Right ventricle myocardium superior (tissue), 1 donor: ENCODE measurements at regions of chr10 and their contacts with region 1.

Region 1: GRCh38 chr10:29635711-29636144 is 957 bp upstream of the SVIL start:
- DNase-seq: no peak
- ATAC-seq: peak; percentile 28

Region 2: DNA sequence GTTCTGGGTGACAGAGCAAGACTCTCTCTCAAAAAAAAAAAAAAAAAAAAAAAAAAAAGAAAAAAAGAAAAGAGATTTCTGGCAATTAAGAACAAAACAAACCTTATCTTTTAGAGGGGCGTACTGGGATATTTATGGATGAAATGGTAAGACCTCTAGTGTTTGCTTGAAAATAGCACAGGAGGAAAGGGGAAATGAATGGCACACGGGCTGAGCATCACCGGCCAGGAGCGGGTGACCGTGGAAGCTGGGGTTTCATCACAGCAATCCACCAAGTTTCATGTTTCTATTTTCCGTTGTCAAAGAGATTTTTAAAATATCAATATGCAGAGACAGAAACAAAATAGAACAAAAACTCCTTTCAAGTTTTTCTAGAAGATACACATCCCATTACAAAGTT is 106.6 kb before region 1 on chr10:
- intact Hi-C with region 1: loop called (anchors 5 kb)
- DNase-seq: no peak
- ATAC-seq: no peak

Region 3: GRCh38 chr10:29857843-29858701 is 222.3 kb after region 1 on chr10:
- intact Hi-C with region 1: loop called (anchors 10 kb)
- DNase-seq: peak; percentile 82
- ATAC-seq: peak; percentile 92